ENCODE measurements at regions of chr9 and their contacts with region 1.

Region 1: DNA sequence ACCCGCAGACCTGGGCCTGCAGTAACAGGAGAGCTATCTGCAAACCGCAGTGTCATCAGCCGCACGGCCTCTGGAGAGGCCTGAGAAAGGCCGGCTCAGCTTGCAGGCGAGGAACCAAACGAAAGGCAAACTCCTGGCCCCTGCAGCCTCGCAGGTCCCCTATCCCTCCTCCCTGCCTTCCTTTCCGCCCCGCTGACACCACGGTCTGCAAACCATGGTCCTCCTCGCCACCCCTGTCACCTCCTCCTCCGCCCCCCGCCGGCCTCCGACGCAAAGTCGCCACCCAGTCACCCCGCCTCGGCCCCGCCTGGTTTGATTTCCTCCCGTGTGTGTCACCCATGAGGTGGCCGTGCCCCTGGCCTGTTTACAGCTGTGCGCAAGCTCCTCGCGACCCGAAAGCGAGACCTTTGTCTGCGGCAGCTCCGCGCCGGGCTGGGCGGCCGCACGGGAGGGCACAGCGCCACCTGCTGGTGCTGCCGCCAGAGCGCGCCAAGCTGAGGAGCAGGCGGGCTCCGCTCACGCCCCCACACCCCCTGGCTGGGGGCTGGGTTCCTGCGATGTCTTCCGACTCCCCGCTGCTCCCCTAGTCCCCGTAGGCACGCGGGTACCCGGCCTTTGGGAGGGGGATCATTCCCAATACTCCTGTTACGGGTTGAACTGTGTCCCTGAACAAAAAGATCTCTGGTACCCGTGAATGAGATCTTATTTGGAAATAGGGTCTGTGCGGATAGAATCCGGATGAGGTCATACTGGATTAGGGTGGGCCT is 19.4 kb downstream of the GBGT1 start:
- DNase-seq: peak; percentile 82
- ATAC-seq: peak; percentile 50
- H3K4me3 Mint-ChIP-seq: peak overlapping the region; percentile 62
- H3K27ac Mint-ChIP-seq: no peak overlapping the region
- H3K4me1 Mint-ChIP-seq: peaks cover 24% of the 10 kb centered on the region
- H3K27me3 Mint-ChIP-seq: peaks cover 10% of the 10 kb centered on the region
- CTCF ChIP-seq: peak; percentile 98

Region 2: DNA sequence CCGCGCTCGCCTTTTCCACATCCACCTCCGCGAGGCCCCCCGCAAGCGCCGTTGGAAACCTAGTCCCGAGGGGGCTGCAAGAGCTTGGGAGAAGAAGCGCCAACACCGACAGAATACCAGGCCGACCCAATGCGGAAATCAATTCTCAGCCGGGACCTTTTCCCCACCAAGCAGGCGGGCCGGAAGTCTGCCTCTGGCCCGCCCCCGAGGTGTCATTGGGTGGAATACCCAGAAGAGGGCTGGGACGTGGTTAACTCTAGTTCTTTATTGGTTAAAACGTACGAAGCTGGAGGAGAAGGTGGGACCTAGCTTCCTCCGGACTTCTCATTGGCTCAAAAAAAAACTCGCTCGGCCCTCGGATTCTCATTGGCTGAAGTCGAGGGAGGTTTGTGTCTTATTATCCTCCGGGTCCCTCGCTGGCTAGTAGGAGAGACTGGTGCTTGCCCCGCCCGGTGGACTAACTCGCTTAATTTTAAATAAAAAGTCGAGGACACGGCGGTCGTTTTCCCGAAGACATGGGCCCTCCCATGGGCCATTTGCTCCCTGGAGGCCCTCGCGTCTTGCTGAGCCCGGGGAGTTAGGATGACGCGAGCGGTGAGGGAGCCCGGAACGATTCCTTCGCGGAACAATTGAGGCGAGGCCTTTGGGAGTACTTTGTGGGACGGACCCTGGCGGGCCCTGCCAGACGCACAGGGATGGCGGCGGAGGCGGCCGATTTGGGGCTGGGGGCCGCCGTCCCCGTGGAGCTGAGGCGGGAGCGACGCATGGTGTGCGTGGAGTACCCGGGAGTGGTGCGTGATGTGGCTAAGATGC is 113.8 kb before region 1 on chr9 and contains the start of gene GTF3C5:
- CTCF ChIA-PET with region 1: interaction called, 47 read pairs
- POLR2A ChIA-PET with region 1: interaction called, 5 read pairs
- DNase-seq: peak; percentile 90
- ATAC-seq: peak; percentile 98
- H3K4me3 Mint-ChIP-seq: peak within 1 kb of the TSS; percentile 99
- H3K27ac Mint-ChIP-seq: peak within 1 kb of the TSS; percentile 99
- H3K4me1 Mint-ChIP-seq: peaks cover 17% of the 10 kb centered on the region
- H3K27me3 Mint-ChIP-seq: peaks cover 12% of the 10 kb centered on the region
- CTCF ChIP-seq: no peak
- total RNA-seq, gene GTF3C5: 86.6 to 104 TPM (median 87.6 TPM) in 3 replicates

Region 3: DNA sequence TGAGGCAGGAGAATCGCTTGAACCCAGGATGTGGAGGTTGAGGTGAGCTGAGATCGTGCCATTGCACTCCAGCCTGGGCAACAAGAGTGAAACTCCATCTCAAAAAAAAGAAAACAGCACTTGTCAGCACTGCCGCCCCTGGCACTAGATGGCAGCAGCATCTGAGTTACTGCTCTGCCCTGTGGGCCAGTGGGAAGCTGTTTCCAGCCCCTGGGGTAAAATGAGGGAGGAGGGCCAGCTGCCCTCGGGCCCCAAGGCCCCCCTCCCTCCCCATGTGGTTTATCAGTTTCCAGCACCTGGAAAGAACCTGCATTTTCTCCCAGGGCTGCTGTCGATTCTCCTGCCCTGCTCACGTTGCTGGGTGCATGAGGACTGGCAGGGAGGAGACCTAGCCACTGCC is 95.8 kb before region 1 on chr9:
- CTCF ChIA-PET with region 1: interaction called, 40 read pairs
- POLR2A ChIA-PET with region 1: no interaction called
- DNase-seq: peak; percentile 43
- ATAC-seq: peak; percentile 87
- H3K4me3 Mint-ChIP-seq: no peak overlapping the region
- H3K27ac Mint-ChIP-seq: no peak overlapping the region
- H3K4me1 Mint-ChIP-seq: no peaks in the 10 kb centered on the region
- H3K27me3 Mint-ChIP-seq: no peaks in the 10 kb centered on the region
- CTCF ChIP-seq: no peak

Region 4: GRCh38 chr9:133075925-133076630 is 68.2 kb before region 1 on chr9:
- CTCF ChIA-PET with region 1: interaction called, 20 read pairs
- POLR2A ChIA-PET with region 1: no interaction called
- DNase-seq: no peak
- ATAC-seq: no peak
- H3K4me3 Mint-ChIP-seq: no peak overlapping the region
- H3K27ac Mint-ChIP-seq: no peak overlapping the region
- H3K4me1 Mint-ChIP-seq: peaks cover 14% of the 10 kb centered on the region
- H3K27me3 Mint-ChIP-seq: peaks cover 7% of the 10 kb centered on the region; the same call in 1 of the 2 replicates
- CTCF ChIP-seq: no peak

Region 5: DNA sequence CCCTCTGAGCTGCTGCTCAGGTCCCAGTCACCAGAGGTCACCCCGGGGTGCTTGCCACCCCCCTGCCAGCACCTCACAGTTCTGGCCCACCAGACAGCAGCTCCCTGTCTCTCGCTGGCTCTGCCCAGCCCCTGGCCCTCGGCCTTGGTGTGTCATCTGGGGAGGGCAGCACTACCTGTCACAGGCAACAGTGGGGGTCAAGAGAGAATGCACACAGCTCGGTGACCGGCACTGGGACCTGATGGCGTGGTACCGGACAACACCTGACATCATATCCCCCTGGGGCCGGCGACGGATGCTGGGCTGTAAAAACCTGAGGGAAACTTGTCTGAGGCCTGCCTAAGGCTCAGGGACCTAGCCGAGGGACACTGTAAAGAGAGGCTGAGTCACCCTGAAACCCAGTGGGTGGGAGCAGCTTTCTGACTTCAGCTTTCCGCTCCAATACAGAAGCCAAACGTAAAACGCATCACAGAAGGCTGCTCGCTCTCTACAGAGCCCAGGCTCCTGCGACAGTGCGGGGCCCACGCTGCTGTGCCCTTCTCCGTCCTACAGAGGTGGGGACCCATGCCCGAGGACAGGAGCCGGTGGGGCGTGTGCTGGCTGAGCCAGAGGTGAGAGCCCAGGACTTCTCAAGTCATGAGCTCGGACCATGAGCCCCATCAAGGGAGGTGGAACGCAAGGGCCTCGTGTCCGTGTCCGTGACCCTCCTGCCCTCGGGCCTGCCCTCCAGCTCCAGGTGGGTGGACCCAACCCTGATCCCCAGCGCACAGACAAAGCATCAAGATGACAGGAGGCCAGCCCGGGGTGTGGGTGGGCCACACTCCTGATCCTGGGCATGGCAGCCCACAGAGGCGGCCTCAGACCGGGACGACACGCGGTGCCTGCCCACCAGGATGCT is 28.6 kb before region 1 on chr9:
- CTCF ChIA-PET with region 1: interaction called, 93 read pairs
- POLR2A ChIA-PET with region 1: interaction called, 3 read pairs
- DNase-seq: no peak
- ATAC-seq: no peak
- H3K4me3 Mint-ChIP-seq: no peak overlapping the region
- H3K27ac Mint-ChIP-seq: no peak overlapping the region
- H3K4me1 Mint-ChIP-seq: peaks cover 9% of the 10 kb centered on the region
- H3K27me3 Mint-ChIP-seq: peaks cover 31% of the 10 kb centered on the region
- CTCF ChIP-seq: no peak

Region 6: DNA sequence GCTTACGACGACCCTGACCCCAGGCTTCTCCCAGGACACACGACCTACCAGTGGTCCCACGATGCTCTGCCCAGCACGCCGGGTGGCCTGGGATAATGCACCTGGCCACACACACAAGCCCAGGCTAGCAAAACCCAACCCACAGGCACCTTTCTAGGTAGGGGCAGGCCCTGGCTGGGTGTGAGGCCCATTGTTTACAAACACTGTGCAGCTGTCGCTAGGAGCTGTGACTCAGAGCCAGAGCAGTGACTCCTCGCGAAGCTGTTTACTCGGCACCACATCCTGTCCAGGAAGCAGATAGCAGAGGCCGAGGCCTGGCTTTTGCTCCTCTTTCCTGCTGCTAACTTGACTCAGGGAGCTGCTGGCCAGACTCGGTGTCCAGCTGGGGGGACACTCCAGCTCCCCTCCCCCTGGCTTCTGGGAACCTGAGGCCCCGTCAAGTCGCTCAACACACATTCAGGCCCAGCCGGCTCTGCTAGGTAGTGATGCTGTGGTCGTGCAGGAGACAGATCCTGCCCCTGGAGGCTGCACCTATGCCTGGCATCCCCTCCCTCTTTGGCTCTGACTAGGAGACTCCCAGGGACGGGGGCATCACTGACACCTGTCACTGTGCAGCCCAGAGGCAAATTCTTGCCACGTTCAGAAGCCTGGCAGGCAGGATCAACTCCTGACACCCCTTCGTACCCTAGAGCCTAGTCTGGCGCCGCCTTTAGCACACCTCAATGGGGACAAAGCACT is 10.5 kb before region 1 on chr9:
- CTCF ChIA-PET with region 1: interaction called, 57 read pairs
- POLR2A ChIA-PET with region 1: interaction called, 3 read pairs
- DNase-seq: peak; percentile 37
- ATAC-seq: peak; percentile 54
- H3K4me3 Mint-ChIP-seq: no peak overlapping the region
- H3K27ac Mint-ChIP-seq: peak overlapping the region; percentile 78
- H3K4me1 Mint-ChIP-seq: peaks cover 7% of the 10 kb centered on the region; the same call in 1 of the 2 replicates
- H3K27me3 Mint-ChIP-seq: no peaks in the 10 kb centered on the region; the same call in 1 of the 2 replicates
- CTCF ChIP-seq: no peak

Region 7: DNA sequence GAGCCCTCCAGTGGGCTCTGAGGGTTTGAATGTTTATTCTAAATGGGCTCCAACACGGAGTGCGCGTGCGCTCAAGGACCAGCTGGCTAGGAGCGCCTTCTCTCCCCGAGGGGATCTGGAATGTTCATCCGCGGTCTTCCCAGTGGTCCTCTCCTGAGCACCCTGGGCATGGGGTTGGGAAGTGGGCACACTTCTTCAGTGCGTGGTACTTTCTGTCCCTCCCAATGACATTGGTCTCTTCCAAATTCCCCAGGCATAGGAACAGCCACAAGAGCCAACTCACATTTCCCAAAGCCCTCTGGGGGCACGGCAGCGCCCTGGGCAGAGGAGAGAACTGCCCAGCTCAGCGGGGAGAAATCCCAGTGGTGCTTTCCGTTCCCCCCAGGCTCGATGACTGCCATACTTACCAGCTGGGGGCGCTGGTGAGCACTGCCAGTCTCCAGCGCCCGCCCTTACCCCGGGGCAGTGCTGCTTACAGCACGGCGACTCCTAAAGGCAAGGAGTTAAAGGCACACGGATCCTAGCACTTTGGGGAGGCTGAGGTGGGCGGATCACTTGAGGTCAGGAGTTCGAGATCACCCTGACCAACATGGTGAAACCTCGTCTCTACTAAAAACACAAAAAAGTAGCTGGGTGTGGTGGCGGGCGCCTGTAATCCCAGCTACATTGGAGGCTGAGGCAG is 94.7 kb after region 1 on chr9:
- CTCF ChIA-PET with region 1: interaction called, 14 read pairs
- POLR2A ChIA-PET with region 1: no interaction called
- DNase-seq: peak; percentile 93
- ATAC-seq: peak; percentile 69
- H3K4me3 Mint-ChIP-seq: peak overlapping the region; percentile 71
- H3K27ac Mint-ChIP-seq: peak overlapping the region; percentile 93
- H3K4me1 Mint-ChIP-seq: peaks cover 4% of the 10 kb centered on the region
- H3K27me3 Mint-ChIP-seq: peaks cover 36% of the 10 kb centered on the region
- CTCF ChIP-seq: peak; percentile 93

Measured in WTC11 (cell line).